Posterior vena cava (tissue), 2 donors: ENCODE measurements at regions of chr2 and their contacts with region 1.

Region 1: GRCh38 chr2:14891546-14891945 is 259.0 kb downstream of the LRATD1 start:
- DNase-seq: no peak

Region 2: GRCh38 chr2:14967729-14968128 is 76.2 kb after region 1 on chr2:
- intact Hi-C with region 1: loop called in 1 of 2 experiments (anchors 2 kb)
- DNase-seq: no peak